MCF 10A (cell line): ENCODE measurements at regions of chr11 and their contacts with region 1.

Region 1: GRCh38 chr11:62905927-62906531 is 15.1 kb downstream of the CHRM1 start:
- DNase-seq: peak; percentile 81
- H3K4me3 Mint-ChIP-seq: no peak overlapping the region
- H3K27ac Mint-ChIP-seq: no peak overlapping the region
- H3K4me1 Mint-ChIP-seq: peaks cover 6% of the 10 kb centered on the region
- H3K27me3 Mint-ChIP-seq: peaks cover 14% of the 10 kb centered on the region
- CTCF ChIP-seq: peak; percentile 95

Region 2: DNA sequence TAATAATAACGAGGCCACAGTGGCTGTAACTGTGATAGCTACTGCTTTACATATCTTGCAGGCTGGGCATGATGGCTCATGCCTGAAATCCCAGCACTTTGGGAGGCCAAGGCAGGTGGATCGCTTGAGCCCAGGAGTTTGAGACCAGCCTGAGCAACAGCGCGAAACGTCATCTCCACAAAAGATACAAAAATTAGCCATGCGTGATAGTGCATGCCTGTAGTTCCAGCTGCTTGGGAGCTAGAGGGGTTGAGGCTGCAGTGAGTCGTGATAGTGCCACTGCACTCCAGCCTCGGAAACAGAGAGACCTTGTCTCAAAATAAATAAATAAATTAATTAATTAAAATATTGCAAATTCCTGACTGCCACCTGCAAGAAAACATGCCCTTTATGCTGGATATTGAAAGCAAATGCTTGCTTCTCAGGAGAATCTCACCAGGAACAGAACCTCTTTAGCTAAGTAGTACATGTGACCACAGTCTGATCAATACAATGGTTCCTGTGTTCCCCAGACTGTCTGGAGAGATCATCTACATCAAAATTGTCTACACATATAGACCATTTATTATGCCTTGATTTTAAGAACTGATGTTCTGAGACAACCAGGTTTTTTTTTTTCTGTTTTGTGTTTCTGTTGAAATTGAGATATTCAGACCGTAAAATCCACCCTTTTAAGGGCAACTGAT is 158.4 kb before region 1 on chr11:
- CTCF ChIA-PET with region 1: no interaction called
- POLR2A ChIA-PET with region 1: no interaction called
- intact Hi-C with region 1: no loop called
- DNase-seq: no peak
- H3K4me3 Mint-ChIP-seq: no peak overlapping the region
- H3K27ac Mint-ChIP-seq: no peak overlapping the region
- H3K4me1 Mint-ChIP-seq: peaks cover 6% of the 10 kb centered on the region
- H3K27me3 Mint-ChIP-seq: no peaks in the 10 kb centered on the region
- CTCF ChIP-seq: no peak

Region 3: GRCh38 chr11:62880803-62881578 is 25.0 kb before region 1 on chr11 and contains the start of gene SLC3A2:
- CTCF ChIA-PET with region 1: interaction called, 27 read pairs
- POLR2A ChIA-PET with region 1: no interaction called
- intact Hi-C with region 1: no loop called
- DNase-seq: peak; percentile 91
- H3K4me3 Mint-ChIP-seq: peak within 1 kb of the TSS; percentile 100
- H3K27ac Mint-ChIP-seq: peak within 1 kb of the TSS; percentile 99
- H3K4me1 Mint-ChIP-seq: peaks cover 47% of the 10 kb centered on the region
- H3K27me3 Mint-ChIP-seq: no peaks in the 10 kb centered on the region
- CTCF ChIP-seq: peak; percentile 70
- total RNA-seq, gene SLC3A2: 838 and 896 TPM in 2 replicates

Region 4: DNA sequence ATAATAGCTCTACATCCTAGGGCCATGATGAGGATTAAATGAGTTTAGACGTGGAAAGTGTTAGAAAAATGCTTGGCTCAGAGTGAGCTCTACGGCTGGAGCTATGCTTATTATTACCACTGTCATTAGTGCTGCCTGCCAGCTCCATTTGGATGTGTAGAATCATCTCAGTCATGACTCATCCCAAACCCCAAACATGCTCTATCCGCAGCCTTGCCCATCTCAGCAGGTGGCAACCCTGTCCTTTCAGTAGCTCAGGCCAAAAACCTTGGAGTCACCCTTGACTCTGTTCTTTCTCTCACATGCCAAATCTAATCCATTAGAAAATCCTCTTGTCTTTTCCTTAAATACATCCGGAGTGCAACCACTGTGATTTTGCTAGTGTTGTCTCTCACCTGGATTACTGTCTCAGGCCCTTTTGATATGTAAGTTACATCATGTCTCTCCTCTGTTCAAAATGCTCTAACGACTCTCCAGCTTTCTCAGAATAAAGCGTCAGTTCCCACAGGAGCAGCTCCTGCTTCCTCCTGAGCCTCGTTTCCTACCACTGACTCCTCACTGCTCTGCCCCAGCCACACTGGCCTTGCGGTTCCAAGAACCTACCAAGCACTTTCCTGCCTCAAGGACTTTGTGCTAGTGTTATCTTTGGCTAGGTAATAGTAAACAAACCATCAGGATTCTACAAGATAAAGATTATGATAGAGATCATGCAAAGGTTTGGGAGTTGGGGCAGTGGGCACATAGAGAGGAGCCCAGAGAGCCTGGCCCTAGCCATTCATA is 25.7 kb after region 1 on chr11:
- CTCF ChIA-PET with region 1: interaction called, 28 read pairs
- POLR2A ChIA-PET with region 1: interaction called, 4 read pairs
- intact Hi-C with region 1: no loop called
- DNase-seq: peak; percentile 79
- H3K4me3 Mint-ChIP-seq: no peak overlapping the region
- H3K27ac Mint-ChIP-seq: no peak overlapping the region
- H3K4me1 Mint-ChIP-seq: peaks cover 8% of the 10 kb centered on the region
- H3K27me3 Mint-ChIP-seq: peaks cover 18% of the 10 kb centered on the region
- CTCF ChIP-seq: no peak

Region 5: GRCh38 chr11:62958547-62959421 is 52.8 kb after region 1 on chr11:
- CTCF ChIA-PET with region 1: interaction called, 10 read pairs
- POLR2A ChIA-PET with region 1: no interaction called
- intact Hi-C with region 1: no loop called
- DNase-seq: no peak
- H3K4me3 Mint-ChIP-seq: no peak overlapping the region
- H3K27ac Mint-ChIP-seq: no peak overlapping the region
- H3K4me1 Mint-ChIP-seq: peaks cover 9% of the 10 kb centered on the region
- H3K27me3 Mint-ChIP-seq: peaks cover 15% of the 10 kb centered on the region
- CTCF ChIP-seq: no peak

Region 6: DNA sequence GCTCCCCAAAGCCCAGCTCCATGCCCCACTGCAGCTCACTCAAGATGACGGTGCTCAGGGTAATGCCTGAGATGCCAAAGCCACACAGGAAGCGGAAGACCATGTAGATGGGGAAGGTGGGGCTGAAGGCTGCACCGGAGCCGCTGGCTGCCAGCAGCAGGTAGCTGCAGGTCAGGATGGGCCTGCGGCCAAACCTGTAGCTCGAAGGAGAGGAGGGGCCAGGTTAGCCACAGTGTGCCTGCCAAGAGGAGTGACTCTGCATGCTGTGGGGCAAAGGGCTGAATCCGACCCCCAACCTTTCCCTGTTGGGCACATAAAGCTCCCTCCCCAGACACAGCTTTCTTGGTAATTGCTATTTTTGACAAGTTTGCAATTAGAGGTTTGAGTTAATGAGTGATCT is 93.6 kb after region 1 on chr11:
- CTCF ChIA-PET with region 1: interaction called, 11 read pairs
- POLR2A ChIA-PET with region 1: no interaction called
- intact Hi-C with region 1: no loop called
- DNase-seq: peak; percentile 73
- H3K4me3 Mint-ChIP-seq: no peak overlapping the region
- H3K27ac Mint-ChIP-seq: no peak overlapping the region
- H3K4me1 Mint-ChIP-seq: no peaks in the 10 kb centered on the region
- H3K27me3 Mint-ChIP-seq: peaks cover 20% of the 10 kb centered on the region
- CTCF ChIP-seq: no peak

Region 7: DNA sequence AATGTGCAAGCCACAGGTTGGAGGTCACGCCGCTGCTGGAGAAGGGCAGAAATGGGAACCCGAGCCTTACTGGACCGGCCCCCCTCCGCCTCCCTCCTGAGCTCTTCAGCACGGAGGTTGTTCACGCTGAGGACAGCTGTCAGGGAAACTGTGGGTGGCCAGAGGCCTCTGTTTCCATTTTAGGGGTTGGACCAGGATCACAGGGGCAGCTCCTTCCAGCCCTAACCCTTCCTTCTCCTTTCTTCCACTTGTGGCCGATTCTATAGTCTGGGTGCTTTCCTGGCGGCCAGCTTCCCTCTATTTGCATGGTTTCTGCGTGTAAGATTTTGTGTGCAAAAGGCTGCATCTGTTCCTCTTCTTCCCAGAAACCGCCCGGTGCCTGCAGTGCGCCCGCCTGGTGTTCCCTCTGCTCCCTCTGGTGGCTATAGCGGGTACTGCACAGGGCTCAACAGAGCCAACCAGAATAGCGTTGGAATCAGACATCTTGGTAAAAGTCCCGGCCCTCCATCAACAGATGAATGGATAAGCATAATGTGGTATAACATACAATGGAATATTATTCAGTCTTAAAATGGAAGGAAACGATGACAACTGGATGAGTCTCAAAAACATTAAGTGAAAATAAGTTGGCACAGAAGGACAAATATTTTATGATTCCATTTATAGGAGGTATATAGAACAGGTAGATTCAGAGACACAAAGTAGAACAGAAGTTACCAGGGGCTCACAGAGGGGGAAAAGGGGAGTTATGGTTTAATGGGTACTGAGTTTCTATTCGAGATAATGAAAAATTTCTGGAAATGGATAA is 118.0 kb after region 1 on chr11:
- CTCF ChIA-PET with region 1: interaction called, 456 read pairs
- POLR2A ChIA-PET with region 1: interaction called, 4 read pairs
- intact Hi-C with region 1: loop called (anchors 1 kb)
- DNase-seq: peak; percentile 76
- H3K4me3 Mint-ChIP-seq: no peak overlapping the region
- H3K27ac Mint-ChIP-seq: no peak overlapping the region
- H3K4me1 Mint-ChIP-seq: peaks cover 6% of the 10 kb centered on the region
- H3K27me3 Mint-ChIP-seq: peaks cover 25% of the 10 kb centered on the region
- CTCF ChIP-seq: peak; percentile 97

Region 8: DNA sequence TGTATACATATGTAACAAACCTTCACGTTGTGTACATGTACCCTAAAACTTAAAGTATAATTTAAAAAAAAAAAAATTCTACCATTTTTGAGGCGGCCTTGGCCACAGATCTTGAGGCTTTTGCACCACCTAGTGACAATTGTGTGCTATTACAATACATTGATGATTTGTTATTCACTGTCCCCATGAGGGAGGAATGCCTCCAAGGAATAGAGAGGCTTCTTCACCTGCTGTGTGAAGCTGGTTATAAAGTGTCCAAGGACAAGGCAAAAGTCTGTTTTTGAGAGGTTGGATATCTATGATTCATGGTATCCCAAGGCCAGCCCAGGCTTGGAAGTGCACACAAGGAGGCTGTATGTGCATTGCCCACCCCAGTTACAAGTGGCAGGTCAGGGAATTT is 306.7 kb after region 1 on chr11:
- CTCF ChIA-PET with region 1: interaction called, 9 read pairs
- POLR2A ChIA-PET with region 1: no interaction called
- intact Hi-C with region 1: loop called (anchors 1 kb)
- DNase-seq: peak; percentile 41
- H3K4me3 Mint-ChIP-seq: no peak overlapping the region
- H3K27ac Mint-ChIP-seq: no peak overlapping the region
- H3K4me1 Mint-ChIP-seq: no peaks in the 10 kb centered on the region
- H3K27me3 Mint-ChIP-seq: peaks cover 53% of the 10 kb centered on the region
- CTCF ChIP-seq: peak; percentile 28